ENCODE measurements at regions of chr20 and their contacts with region 1.

Region 1: DNA sequence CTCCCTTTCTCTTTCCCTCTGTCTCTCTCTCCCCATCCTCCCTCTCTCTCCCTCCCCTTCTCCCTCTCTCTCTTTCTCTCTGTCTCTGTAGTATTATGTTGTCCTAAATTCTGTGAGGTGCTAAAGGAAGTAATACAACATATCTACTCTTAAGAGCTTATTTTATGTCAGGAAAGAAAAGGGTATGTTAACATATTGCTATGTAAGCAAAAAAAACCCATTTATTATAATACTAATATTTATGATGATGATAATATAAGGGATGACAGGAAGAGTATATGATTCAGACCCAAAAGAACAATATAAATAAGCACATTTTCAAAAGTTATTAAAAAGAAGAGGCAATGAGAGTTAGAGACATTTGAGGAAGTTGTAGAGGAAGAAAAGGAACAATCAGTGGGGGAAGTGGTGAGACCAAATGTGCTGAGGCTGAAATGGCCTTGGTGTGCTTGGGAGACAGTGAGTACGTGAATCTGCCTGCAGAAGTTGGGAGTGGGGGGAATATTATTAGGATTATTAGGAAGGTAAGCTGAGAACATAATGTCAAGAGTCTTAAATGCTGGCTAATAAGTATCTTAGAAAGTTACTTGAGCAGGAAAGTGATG is 303.6 kb upstream of the FERMT1 start:
- DNase-seq: no peak
- H3K4me3 ChIP-seq: no peak overlapping the region
- CTCF ChIP-seq: no peak

Region 2: GRCh38 chr20:6466075-6466810 is 39.9 kb after region 1 on chr20:
- in situ Hi-C with region 1: loop called (anchors 5 kb)
- DNase-seq: no peak
- H3K4me3 ChIP-seq: no peak overlapping the region
- CTCF ChIP-seq: no peak

Region 3: DNA sequence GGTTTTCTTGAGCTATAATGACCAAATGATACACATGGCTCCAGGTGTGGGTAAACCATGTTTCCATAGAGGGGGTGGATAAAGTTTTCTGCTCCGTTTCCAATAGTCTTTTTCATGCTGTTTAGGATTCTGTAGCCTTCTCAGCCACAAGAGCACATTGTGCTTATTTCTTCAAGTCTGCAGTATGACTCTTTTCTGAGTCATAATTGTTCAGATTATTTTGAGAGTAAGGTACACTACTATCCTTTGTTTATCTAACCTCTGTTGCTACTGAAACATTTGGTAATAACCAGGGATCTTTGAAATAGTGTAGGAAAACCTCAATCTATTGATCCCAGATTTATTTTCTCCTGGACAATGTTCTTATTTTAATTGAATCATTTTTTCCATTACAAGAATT is 93.2 kb after region 1 on chr20:
- in situ Hi-C with region 1: loop called (anchors 5 kb)
- DNase-seq: peak; percentile 76
- H3K4me3 ChIP-seq: no peak overlapping the region
- CTCF ChIP-seq: no peak